ENCODE measurements at regions of chr3 and their contacts with region 1.

Region 1: GRCh38 chr3:132573797-132574211 is 23.3 kb upstream of the ACKR4 start:
- DNase-seq: peak in 1 of 2 donors; percentile 62
- H3K4me3 ChIP-seq: no peak overlapping the region
- H3K27ac ChIP-seq: peak overlapping the region; percentile 57 to 62
- H3K4me1 ChIP-seq: peaks cover 0 to 17% of the 10 kb centered on the region in 2 donors
- H3K27me3 ChIP-seq: no peaks in the 10 kb centered on the region
- CTCF ChIP-seq: no peak

Region 2: DNA sequence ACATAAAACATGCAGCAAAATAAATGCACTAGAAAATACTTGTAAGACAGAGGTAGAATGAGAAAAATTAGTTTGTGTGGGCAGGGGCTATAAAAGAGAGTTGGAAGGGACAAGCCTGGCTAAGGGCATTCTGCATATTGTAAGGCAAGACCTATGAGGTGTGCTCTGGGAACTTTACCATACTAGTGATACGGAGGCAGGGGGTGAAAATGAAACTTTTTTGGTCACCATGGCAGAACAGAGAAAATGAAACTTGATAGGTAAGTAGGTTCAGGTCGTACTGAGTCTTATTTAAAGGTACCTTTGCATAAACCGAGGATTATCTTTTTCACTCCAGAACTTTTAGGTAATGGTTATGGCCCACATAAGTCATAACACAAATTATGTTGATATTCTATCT is 51.5 kb before region 1 on chr3:
- intact Hi-C with region 1: no loop called
- DNase-seq: no peak
- H3K4me3 ChIP-seq: peak overlapping the region in 1 of 2 donors; percentile 6
- H3K27ac ChIP-seq: peak overlapping the region in 1 of 2 donors; percentile 2
- H3K4me1 ChIP-seq: no peaks in the 10 kb centered on the region
- H3K27me3 ChIP-seq: no peaks in the 10 kb centered on the region
- CTCF ChIP-seq: no peak

Region 3: DNA sequence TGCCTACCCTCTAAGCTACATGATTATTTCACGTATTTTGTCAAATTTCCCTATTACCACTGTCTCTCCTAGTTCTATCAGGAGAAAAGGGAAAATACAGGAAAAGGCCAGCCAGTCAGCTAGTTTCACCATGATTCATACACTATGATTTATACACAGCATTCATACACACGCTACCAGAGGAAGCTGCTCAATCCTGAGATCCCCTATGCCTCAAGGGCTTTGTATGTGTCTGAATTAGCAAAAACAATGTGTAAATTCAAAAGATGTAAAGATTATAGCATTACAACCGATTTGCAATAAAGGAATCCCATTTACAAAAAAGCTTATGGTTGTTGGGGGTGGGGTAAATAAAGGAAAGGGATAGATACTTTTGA is 20.1 kb after region 1 on chr3:
- intact Hi-C with region 1: loop called (anchors 2 kb)
- DNase-seq: no peak
- H3K4me3 ChIP-seq: no peak overlapping the region
- H3K27ac ChIP-seq: peak overlapping the region; percentile 39 to 63
- H3K4me1 ChIP-seq: peaks cover 0 to 21% of the 10 kb centered on the region in 2 donors
- H3K27me3 ChIP-seq: no peaks in the 10 kb centered on the region
- CTCF ChIP-seq: no peak

Region 4: DNA sequence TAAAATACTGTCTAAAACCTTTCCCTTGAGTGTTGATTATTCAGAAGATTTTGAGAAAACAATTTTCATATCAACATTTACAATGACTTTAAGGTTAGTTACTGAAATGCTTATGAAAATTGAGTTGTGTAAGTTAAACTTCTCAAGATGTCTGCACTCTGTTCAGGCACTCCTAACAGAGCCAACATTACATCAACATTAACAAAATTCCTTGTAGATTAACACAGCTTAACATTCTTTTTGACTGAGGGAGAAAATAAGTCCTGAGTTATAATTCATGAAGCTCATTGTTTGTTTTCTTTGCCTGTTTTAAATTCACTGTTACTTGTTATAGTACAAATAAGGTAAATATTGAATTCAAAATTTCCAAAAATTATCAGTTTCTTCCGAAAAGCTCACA is 32.3 kb after region 1 on chr3:
- intact Hi-C with region 1: loop called (anchors 5 kb)
- DNase-seq: no peak
- H3K4me3 ChIP-seq: peak overlapping the region; percentile 4 to 13
- H3K27ac ChIP-seq: peak overlapping the region; percentile 82 to 85
- H3K4me1 ChIP-seq: peaks cover 5 to 33% of the 10 kb centered on the region in 2 donors
- H3K27me3 ChIP-seq: no peaks in the 10 kb centered on the region
- CTCF ChIP-seq: no peak

Measured in ascending aorta (tissue), 2 donors.